CD4-positive, alpha-beta T cell (primary cell): ENCODE measurements at regions of chr3 and their contacts with region 1.

Region 1: GRCh38 chr3:38651154-38651789 is 1.8 kb upstream of the SCN5A start:
- DNase-seq: peak; percentile 52 to 86 (median 60)
- ATAC-seq: peak; percentile 69
- H3K4me3 ChIP-seq: no peak overlapping the region
- H3K4me3 Mint-ChIP-seq: peak overlapping the region; percentile 78
- H3K27ac ChIP-seq: no peak overlapping the region
- H3K27ac Mint-ChIP-seq: no peak overlapping the region
- H3K4me1 ChIP-seq: peaks cover 32% of the 10 kb centered on the region
- H3K4me1 Mint-ChIP-seq: peaks cover 11% of the 10 kb centered on the region
- H3K27me3 ChIP-seq: peaks cover 23 to 31% of the 10 kb centered on the region in 2 experiments
- H3K27me3 Mint-ChIP-seq: peaks cover 17% of the 10 kb centered on the region
- CTCF ChIP-seq: peak; percentile 97

Region 2: DNA sequence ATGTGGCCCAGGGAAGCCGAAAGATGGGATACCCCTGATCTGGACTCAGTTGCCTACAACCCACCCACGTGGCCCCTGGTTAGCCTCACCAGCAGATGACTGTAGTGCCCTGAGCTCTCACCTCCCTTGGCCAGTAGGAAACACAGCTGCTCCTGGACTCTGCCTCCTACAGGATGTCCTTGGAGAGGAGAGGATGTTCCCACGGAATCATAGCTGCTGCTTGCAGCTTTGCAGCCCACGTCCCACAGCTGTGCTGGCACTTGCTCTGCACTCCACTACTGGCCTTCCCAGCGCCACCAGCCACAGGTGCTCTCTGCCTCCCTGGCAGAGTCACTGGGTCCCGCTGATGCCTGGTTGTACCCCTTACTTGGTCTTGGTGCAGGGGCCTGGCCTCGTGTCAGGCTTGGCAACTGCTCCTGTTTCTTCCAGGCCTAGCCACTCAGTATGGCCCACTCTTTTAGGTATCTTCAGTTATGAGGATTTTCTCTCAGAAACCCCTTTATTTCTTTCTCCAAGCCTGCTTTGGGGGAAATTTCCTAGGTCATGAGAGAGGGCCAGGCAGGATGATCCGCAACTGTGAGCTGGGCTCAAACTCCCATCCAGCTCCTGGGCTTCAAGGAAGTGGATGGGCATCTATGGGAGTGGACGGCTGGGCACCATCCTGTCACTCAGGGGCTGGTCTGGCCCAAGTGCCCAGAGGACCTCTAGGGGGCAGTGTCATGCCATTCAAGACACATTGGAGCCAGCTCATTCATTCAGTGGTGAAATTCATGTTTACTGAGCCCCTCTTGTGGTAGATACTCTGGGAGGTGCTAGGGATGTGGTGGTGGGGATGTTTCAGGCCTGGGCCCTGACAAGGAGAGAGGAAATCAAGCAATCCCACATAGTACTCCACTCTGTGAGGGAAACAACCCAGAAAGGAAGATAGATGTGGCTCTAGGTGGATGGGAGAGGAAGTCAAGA is 676.9 kb before region 1 on chr3:
- CTCF ChIA-PET with region 1: no interaction called
- POLR2A ChIA-PET with region 1: no interaction called
- intact Hi-C with region 1: loop called in 1 of 2 experiments (anchors 10 kb)
- DNase-seq: peak; percentile 49 to 85 (median 62)
- ATAC-seq: peak; percentile 97
- H3K4me3 ChIP-seq: no peak overlapping the region
- H3K4me3 Mint-ChIP-seq: no peak overlapping the region
- H3K27ac ChIP-seq: no peak overlapping the region
- H3K27ac Mint-ChIP-seq: no peak overlapping the region
- H3K4me1 ChIP-seq: peaks cover 5% of the 10 kb centered on the region
- H3K4me1 Mint-ChIP-seq: peaks cover 4% of the 10 kb centered on the region
- H3K27me3 ChIP-seq: no peaks in the 10 kb centered on the region
- H3K27me3 Mint-ChIP-seq: no peaks in the 10 kb centered on the region
- CTCF ChIP-seq: peak; percentile 85

Region 3: DNA sequence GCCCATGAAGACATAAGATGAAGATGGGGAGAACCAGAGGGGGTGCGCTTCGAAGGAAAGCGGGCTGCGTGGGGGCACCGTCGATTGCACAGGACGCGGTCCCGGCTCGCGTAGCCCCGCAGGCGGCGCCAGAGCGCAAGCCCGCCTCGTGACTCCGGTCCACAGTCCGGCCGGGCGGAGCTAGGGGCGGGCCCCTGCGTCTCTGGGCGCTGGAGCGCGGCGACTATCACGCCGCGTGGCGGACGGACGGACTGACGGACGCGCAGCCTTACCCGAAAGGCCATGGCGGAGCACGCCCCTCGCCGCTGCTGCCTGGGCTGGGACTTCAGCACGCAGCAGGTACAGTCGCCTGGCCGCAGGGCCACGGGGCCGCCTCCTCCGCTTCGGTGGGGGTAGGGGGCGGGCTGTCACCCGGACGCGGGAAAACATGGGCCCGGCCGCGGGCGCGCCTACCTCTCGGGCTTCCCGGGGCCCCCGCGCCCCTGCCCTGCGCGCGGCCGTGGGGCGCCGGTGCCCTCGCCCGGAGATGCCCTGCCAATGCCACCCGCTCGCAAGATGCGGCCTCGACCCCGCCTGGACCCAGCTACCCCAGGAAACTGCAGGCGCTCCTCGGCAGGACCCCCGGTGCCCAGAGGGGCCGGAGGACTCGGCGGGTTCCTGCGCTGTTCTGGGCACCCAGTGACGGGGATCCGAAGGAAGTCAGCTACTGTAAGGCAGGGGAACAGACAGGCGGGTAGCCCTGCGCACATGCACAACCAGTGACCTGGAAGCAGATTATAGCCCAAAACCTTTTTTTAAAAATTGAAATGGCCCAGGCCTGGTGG is 304.5 kb before region 1 on chr3 and contains the start of gene XYLB:
- CTCF ChIA-PET with region 1: no interaction called
- POLR2A ChIA-PET with region 1: no interaction called
- intact Hi-C with region 1: loop called in 1 of 2 experiments (anchors 2 kb)
- DNase-seq: peak; percentile 42 to 87 (median 66)
- ATAC-seq: peak; percentile 95
- H3K4me3 ChIP-seq: peak within 1 kb of the TSS; percentile 53
- H3K4me3 Mint-ChIP-seq: peak within 1 kb of the TSS; percentile 91
- H3K27ac ChIP-seq: no peak within 1 kb of the TSS
- H3K27ac Mint-ChIP-seq: no peak within 1 kb of the TSS
- H3K4me1 ChIP-seq: peaks cover 16% of the 10 kb centered on the region
- H3K4me1 Mint-ChIP-seq: peaks cover 7% of the 10 kb centered on the region
- H3K27me3 ChIP-seq: no peaks in the 10 kb centered on the region
- H3K27me3 Mint-ChIP-seq: no peaks in the 10 kb centered on the region
- CTCF ChIP-seq: peak; percentile 80
- total RNA-seq, gene XYLB: 0.25 to 0.59 TPM

Region 4: DNA sequence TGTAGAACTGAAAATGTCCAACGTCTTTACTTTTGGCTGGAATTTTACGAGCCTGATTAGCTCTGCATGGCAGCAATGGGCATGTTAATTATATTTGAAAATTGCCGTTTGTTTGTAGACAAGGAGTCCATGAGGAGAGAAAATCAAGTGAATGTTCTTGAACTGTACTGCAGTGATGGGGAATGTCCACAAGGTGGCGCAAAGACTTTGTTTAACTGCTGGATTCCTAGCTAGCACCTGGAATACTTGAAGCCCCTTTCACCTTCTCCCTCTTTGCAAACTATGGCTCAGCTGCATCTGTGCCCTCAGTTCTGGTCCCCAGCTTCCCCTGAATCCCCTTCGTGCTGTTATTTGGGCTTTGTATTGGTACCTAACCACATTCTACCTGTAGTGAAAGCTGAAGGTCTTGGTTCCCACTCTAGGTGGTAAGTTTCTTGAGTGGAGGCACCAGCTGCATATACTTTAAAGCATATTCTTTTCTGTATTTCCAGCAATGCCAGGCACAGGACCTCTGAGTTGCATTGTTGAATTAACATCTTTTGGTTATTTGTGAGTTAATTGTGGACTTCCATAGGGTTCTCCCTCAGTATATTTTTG is 129.8 kb before region 1 on chr3:
- CTCF ChIA-PET with region 1: interaction called, 29 read pairs
- POLR2A ChIA-PET with region 1: interaction called, 4 read pairs
- intact Hi-C with region 1: loop called (anchors 1 kb)
- DNase-seq: peak; percentile 41 to 82 (median 54)
- ATAC-seq: peak; percentile 69
- H3K4me3 ChIP-seq: no peak overlapping the region
- H3K4me3 Mint-ChIP-seq: no peak overlapping the region
- H3K27ac ChIP-seq: no peak overlapping the region
- H3K27ac Mint-ChIP-seq: peak overlapping the region; percentile 57
- H3K4me1 ChIP-seq: peaks cover 16% of the 10 kb centered on the region
- H3K4me1 Mint-ChIP-seq: peaks cover 40% of the 10 kb centered on the region
- H3K27me3 ChIP-seq: no peaks in the 10 kb centered on the region
- H3K27me3 Mint-ChIP-seq: no peaks in the 10 kb centered on the region
- CTCF ChIP-seq: peak; percentile 93

Region 5: DNA sequence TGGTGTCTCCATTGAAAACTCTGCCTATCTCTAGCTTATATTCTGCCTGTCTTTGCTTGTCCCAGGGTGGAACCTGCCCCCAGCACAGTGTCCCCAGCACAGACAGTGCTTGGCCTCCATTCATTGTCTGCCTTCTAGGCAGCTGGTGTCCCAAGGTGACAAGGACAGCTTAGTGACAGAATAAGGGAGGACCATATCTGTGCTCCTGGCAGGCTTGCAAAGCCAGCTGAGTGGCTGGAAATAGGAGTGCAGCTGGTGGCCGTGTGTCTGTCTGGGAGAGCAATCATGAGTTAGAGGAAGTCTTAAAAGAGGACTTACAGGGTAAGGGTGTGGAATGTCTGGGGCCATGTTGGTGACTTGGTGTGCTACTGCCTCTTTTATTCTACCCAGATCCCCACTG is 35.2 kb before region 1 on chr3:
- CTCF ChIA-PET with region 1: no interaction called
- POLR2A ChIA-PET with region 1: no interaction called
- intact Hi-C with region 1: no loop called
- DNase-seq: no peak
- ATAC-seq: no peak
- H3K4me3 ChIP-seq: no peak overlapping the region
- H3K4me3 Mint-ChIP-seq: no peak overlapping the region
- H3K27ac ChIP-seq: no peak overlapping the region
- H3K27ac Mint-ChIP-seq: no peak overlapping the region
- H3K4me1 ChIP-seq: no peaks in the 10 kb centered on the region
- H3K4me1 Mint-ChIP-seq: no peaks in the 10 kb centered on the region
- H3K27me3 ChIP-seq: no peaks in the 10 kb centered on the region
- H3K27me3 Mint-ChIP-seq: no peaks in the 10 kb centered on the region
- CTCF ChIP-seq: no peak

Region 6: DNA sequence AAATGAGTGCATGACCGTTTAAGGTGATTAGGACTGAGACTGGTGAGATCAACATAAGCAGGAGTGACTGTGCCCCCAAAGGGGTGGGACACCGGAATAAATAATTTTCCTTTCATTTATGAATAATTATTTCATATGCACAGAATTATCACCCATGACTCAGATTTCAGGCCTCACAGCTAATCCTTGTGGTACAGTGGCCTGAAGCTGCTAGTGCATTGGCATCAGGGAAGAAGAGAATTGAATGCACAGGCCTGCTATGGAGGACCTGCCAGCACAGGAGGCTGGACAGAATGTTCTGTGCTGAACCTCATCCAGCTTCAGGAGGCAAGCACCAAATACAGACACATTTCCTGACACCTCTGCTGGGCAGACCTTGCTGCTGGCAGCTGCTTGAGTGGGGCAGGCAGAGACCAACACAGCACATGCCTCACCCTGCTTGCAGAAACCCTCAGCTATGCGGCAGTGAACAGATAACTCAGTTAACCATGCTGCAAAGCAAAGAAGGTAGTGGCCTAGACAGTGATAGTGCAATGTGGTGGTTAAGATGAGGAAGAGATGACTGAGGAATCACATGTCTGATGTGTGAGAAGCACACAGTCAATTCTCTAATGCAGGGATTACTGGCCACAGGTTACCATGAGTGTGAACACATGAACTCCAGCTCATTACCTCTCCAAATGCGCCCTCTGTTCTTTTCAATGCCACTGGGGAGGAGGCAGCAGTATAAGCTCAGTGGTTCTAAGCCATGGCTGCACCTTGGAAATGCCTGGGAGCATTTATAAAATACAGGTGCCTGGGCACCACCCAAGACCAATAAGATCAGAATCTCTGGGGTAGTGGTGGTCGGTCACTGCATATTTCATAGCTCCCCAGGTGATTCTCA is 66.3 kb after region 1 on chr3:
- CTCF ChIA-PET with region 1: no interaction called
- POLR2A ChIA-PET with region 1: no interaction called
- intact Hi-C with region 1: no loop called
- DNase-seq: no peak
- ATAC-seq: no peak
- H3K4me3 ChIP-seq: no peak overlapping the region
- H3K4me3 Mint-ChIP-seq: no peak overlapping the region
- H3K27ac ChIP-seq: no peak overlapping the region
- H3K27ac Mint-ChIP-seq: no peak overlapping the region
- H3K4me1 ChIP-seq: no peaks in the 10 kb centered on the region
- H3K4me1 Mint-ChIP-seq: no peaks in the 10 kb centered on the region
- H3K27me3 ChIP-seq: no peaks in the 10 kb centered on the region
- H3K27me3 Mint-ChIP-seq: peaks cover 22% of the 10 kb centered on the region
- CTCF ChIP-seq: no peak